Activated CD4-positive, alpha-beta T cell treated with anti-CD3 and anti-CD28 coated beads for 36 hours (primary cell): ENCODE measurements at regions of chr2 and their contacts with region 1.

Region 1: DNA sequence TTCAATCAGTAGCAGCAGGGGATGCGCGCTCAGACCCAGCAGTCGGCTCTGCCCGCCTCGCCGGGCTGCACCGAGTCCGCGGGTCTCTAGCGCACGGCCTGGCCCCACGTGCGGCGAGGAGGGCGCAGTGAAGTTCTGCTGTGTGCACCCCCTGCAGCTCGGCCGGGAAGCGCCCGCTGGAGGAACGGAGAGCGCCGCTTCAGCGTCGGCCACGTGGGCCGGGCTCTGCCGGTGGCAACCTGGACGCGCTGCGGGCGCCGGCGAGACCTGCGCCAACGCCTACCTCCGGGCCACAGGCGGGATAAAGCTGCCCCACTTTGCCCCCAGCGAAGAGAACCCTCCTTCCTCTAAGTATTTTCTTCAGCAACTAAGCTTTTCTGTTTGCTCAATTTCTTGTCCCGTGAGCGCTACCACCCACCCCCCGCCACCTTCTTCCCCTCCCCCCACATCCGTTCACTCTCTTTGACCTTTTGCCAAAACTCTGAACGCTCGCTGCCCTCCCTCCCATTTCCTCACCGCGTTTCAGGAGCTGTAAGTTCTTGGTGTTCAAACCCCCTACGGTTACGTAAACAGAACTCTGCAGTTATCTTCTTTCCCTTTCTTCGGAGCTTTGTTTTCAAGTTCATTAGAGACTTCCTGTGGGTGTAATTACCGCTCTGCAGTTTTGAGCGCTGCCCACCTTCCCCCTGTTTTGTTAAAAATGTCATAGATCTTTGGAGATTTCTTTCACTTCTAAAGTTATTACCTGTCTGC is 42.6 kb upstream of the EDAR start:
- DNase-seq: peak; percentile 77
- ATAC-seq: peak; percentile 63
- H3K4me3 Mint-ChIP-seq: peak overlapping the region; percentile 71
- H3K27ac Mint-ChIP-seq: peak overlapping the region; percentile 86
- H3K4me1 Mint-ChIP-seq: peaks cover 61% of the 10 kb centered on the region
- H3K27me3 Mint-ChIP-seq: no peaks in the 10 kb centered on the region

Region 2: DNA sequence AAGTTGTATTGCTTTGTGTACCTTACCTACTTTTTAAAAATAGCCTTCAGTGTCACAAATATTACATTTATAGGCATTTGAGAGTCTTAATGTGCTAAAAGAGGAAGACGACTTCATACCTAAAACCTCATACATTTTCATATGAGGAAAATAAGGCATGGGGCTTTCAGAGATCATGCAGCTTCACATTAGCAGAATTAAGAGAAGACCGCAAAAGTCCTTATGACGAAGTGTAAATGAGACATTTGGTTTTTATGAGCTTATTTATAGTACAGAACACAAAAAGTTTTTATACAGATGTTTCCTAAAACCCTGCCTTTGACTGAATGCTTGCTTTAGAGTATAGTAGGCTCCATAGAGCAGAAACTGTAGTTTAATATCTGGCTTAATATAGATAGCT is 255.2 kb before region 1 on chr2:
- CTCF ChIA-PET with region 1: no interaction called
- POLR2A ChIA-PET with region 1: no interaction called
- intact Hi-C with region 1: no loop called
- DNase-seq: no peak
- ATAC-seq: no peak
- H3K4me3 Mint-ChIP-seq: no peak overlapping the region
- H3K27ac Mint-ChIP-seq: peak overlapping the region; percentile 67
- H3K4me1 Mint-ChIP-seq: no peaks in the 10 kb centered on the region
- H3K27me3 Mint-ChIP-seq: no peaks in the 10 kb centered on the region

Region 3: GRCh38 chr2:108960006-108960405 is 71.6 kb before region 1 on chr2:
- CTCF ChIA-PET with region 1: no interaction called
- POLR2A ChIA-PET with region 1: no interaction called
- intact Hi-C with region 1: loop called in 1 of 2 experiments (anchors 5 kb)
- DNase-seq: peak; percentile 42
- ATAC-seq: peak; percentile 27
- H3K4me3 Mint-ChIP-seq: no peak overlapping the region
- H3K27ac Mint-ChIP-seq: peak overlapping the region; percentile 38
- H3K4me1 Mint-ChIP-seq: peaks cover 81% of the 10 kb centered on the region
- H3K27me3 Mint-ChIP-seq: no peaks in the 10 kb centered on the region